Ascending aorta (tissue), 2 donors: ENCODE measurements at regions of chr16 and their contacts with region 1.

Region 1: GRCh38 chr16:72066747-72067146 is 3.7 kb downstream of the HPR start:
- DNase-seq: no peak
- H3K4me3 ChIP-seq: no peak overlapping the region
- H3K27ac ChIP-seq: no peak overlapping the region
- H3K4me1 ChIP-seq: no peaks in the 10 kb centered on the region
- H3K27me3 ChIP-seq: no peaks in the 10 kb centered on the region
- CTCF ChIP-seq: peak in 2 of 3 experiments; percentile 34 to 52

Region 2: DNA sequence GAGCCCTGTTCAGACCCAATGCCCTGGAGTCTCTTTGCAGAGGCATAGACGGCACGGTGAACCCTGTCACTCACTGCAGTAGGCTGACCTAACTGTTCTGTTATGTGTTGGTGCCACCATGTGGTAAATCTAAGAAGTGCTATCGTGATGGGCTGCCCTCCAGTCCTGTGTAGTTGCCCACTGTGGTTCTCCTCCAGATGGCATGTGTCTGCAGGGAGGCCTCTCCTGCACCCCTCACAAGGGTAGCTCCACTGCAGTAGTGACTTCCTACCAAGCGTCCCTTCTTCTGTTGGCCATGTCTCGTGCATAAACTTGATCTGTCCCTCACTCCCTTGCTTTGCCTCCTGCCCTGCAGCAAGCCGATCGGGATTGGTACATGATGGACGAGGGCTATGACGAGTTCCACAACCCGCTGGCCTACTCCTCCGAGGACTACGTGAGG is 32.7 kb after region 1 on chr16:
- intact Hi-C with region 1: loop called (anchors 2 kb)
- DNase-seq: no peak
- H3K4me3 ChIP-seq: no peak overlapping the region
- H3K27ac ChIP-seq: no peak overlapping the region
- H3K4me1 ChIP-seq: peaks cover 8 to 10% of the 10 kb centered on the region in 2 donors
- H3K27me3 ChIP-seq: no peaks in the 10 kb centered on the region
- CTCF ChIP-seq: peak in 2 of 3 experiments; percentile 34 to 43

Region 3: GRCh38 chr16:72442385-72443158 is 375.8 kb after region 1 on chr16:
- intact Hi-C with region 1: no loop called
- DNase-seq: no peak
- H3K4me3 ChIP-seq: no peak overlapping the region
- H3K27ac ChIP-seq: no peak overlapping the region
- H3K4me1 ChIP-seq: no peaks in the 10 kb centered on the region
- H3K27me3 ChIP-seq: no peaks in the 10 kb centered on the region
- CTCF ChIP-seq: no peak